Gastrocnemius medialis (tissue), 4 donors: ENCODE measurements at regions of chr3 and their contacts with region 1.

Region 1: GRCh38 chr3:42443819-42444436 is 33.5 kb upstream of the LYZL4 start:
- DNase-seq: peak; percentile 56 to 58
- ATAC-seq: peak; percentile 82 to 96
- H3K4me3 ChIP-seq: no peak overlapping the region
- H3K27ac ChIP-seq: no peak overlapping the region
- H3K4me1 ChIP-seq: peaks cover 3 to 5% of the 10 kb centered on the region in 2 donors
- H3K27me3 ChIP-seq: no peaks in the 10 kb centered on the region
- CTCF ChIP-seq: peak; percentile 78 to 97 (median 87)
- POLR2A ChIP-seq: no peak

Region 2: DNA sequence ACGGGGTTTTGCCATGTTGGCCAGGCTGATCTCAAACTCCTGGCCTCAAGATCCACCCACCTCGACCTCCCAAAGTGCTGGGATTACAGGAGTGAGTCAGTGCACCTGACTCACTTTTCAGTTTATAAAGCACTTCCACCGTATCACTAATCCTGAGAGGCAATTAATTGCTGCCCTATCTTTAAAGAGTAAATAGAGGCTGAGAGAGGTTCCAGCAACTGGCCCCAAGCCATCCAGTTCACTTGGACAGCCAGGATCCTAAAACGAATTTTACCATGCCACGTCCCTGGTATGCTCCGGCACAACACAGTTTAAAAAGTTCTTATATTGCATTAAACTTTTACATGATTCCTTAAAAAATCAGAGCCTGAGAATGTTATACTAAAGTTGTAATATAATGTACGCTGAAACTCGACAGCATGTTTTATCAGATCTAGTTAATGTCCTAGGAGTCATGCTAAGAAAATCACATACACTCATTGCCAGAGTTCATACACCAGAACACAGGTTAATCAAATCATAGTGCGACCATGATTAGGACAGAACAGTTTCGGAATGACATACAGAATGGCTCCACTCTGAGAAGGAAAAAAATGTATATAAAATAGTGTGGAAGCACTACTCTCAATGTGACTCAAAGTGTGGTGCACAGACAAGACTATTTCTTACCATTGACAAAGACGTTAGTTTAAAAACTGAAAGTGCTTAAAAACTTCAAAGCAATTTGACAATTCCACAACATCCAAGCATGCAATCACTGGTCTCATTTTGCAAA is 607.4 kb before region 1 on chr3:
- in situ Hi-C with region 1: no loop called
- intact Hi-C with region 1: no loop called
- DNase-seq: no peak
- ATAC-seq: no peak
- H3K4me3 ChIP-seq: no peak overlapping the region
- H3K27ac ChIP-seq: no peak overlapping the region
- H3K4me1 ChIP-seq: no peaks in the 10 kb centered on the region
- H3K27me3 ChIP-seq: no peaks in the 10 kb centered on the region
- CTCF ChIP-seq: no peak
- POLR2A ChIP-seq: no peak

Region 3: GRCh38 chr3:41893977-41894376 is 550.0 kb before region 1 on chr3:
- in situ Hi-C with region 1: loop called in 1 of 4 experiments (anchors 25 kb)
- intact Hi-C with region 1: loop called (anchors 5 kb)
- DNase-seq: no peak
- ATAC-seq: no peak
- H3K4me3 ChIP-seq: no peak overlapping the region
- H3K27ac ChIP-seq: no peak overlapping the region
- H3K4me1 ChIP-seq: no peaks in the 10 kb centered on the region
- H3K27me3 ChIP-seq: no peaks in the 10 kb centered on the region
- CTCF ChIP-seq: peak; percentile 44 to 67 (median 45)
- POLR2A ChIP-seq: no peak

Region 4: GRCh38 chr3:42118762-42119361 is 325.1 kb before region 1 on chr3:
- in situ Hi-C with region 1: loop called in 3 of 4 experiments (anchors 25 kb)
- intact Hi-C with region 1: loop called (anchors 2 kb)
- DNase-seq: peak; percentile 31 to 71
- ATAC-seq: peak; percentile 47 to 55
- H3K4me3 ChIP-seq: no peak overlapping the region
- H3K27ac ChIP-seq: peak overlapping the region; percentile 82 to 90 (median 88)
- H3K4me1 ChIP-seq: peaks cover 82 to 86% of the 10 kb centered on the region in 2 donors
- H3K27me3 ChIP-seq: no peaks in the 10 kb centered on the region
- CTCF ChIP-seq: peak; percentile 29 to 64 (median 56)
- POLR2A ChIP-seq: no peak

Region 5: DNA sequence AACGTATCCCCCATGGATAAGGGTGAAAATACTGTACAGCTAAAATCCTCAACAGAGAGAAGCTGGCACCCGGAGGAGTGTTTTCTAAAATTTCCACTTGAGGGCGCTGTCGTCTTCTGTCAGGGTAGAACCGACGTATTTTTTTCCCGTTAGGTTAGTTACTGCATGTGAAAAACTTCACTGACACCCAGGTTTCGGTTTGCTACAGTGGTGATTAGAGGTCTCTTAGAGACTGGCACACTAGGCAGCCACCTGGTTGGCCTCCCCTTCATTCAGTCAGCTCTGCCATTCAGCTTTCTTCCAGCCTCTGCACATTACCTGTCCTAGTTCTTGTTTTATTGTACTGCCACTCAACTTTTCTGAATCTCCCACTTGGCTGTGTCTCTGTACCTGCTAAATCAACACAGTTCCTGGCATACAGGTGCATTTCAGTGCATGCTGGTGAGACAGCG is 196.3 kb before region 1 on chr3:
- in situ Hi-C with region 1: loop called in 1 of 4 experiments (anchors 10 kb)
- intact Hi-C with region 1: loop called (anchors 1 kb)
- DNase-seq: peak in 1 of 2 donors; percentile 30
- ATAC-seq: peak in 1 of 2 donors; percentile 58
- H3K4me3 ChIP-seq: no peak overlapping the region
- H3K27ac ChIP-seq: no peak overlapping the region
- H3K4me1 ChIP-seq: no peaks in the 10 kb centered on the region
- H3K27me3 ChIP-seq: no peaks in the 10 kb centered on the region
- CTCF ChIP-seq: peak; percentile 29 to 63 (median 60)
- POLR2A ChIP-seq: no peak

Region 6: DNA sequence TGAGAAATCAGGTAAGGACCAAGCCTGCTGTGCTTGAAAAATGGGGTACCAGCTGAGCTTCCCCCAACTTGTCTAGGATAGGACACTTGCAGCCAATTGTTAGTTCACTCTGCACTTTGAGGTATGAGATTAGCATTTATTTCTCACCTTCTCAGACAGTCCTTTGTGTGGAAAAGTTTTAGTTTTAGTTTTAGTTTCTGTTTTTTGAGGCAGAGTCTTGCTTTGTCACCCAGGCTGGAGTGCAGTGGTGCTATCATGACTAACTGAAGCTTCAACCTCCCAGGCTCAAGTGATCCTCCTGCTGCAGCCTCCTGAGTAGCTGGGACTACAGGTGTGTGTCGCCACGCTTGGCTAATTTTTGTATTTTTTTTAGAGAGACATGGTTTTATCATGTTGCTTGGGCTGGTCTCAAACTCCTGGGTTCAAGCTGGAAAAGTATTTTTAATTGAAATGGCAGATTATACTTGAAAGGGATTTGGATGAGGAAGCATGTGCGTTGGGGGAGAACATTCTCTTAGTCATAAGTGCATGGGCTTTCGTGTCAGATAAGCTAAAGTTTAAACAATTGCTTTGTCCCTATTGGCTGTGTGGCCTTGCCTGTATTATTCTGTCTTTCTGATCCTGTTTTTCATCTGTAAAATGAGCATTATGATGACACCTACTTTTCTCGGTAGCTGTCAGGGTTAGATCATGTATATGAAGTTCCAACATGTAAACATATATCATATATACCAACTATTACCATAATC is 152.8 kb before region 1 on chr3:
- in situ Hi-C with region 1: no loop called
- intact Hi-C with region 1: no loop called
- DNase-seq: no peak
- ATAC-seq: no peak
- H3K4me3 ChIP-seq: no peak overlapping the region
- H3K27ac ChIP-seq: no peak overlapping the region
- H3K4me1 ChIP-seq: no peaks in the 10 kb centered on the region
- H3K27me3 ChIP-seq: no peaks in the 10 kb centered on the region
- CTCF ChIP-seq: no peak
- POLR2A ChIP-seq: no peak